ENCODE measurements at regions of chr12 and their contacts with region 1.

Region 1: GRCh38 chr12:15584366-15585041 is 204.7 kb downstream of the EPS8 start:
- H3K4me3 ChIP-seq: no peak overlapping the region
- H3K27ac ChIP-seq: no peak overlapping the region
- H3K4me1 ChIP-seq: no peaks in the 10 kb centered on the region; the same call in 1 of the 2 replicates
- CTCF ChIP-seq: no peak

Region 2: GRCh38 chr12:15522565-15523187 is 61.8 kb before region 1 on chr12:
- CTCF ChIA-PET with region 1: interaction called, 10 read pairs
- POLR2A ChIA-PET with region 1: no interaction called
- H3K4me3 ChIP-seq: no peak overlapping the region
- H3K27ac ChIP-seq: no peak overlapping the region
- H3K4me1 ChIP-seq: no peaks in the 10 kb centered on the region
- CTCF ChIP-seq: 0 out of 2 replicates have a peak, but pooled peaks have one; percentile 38

Region 3: DNA sequence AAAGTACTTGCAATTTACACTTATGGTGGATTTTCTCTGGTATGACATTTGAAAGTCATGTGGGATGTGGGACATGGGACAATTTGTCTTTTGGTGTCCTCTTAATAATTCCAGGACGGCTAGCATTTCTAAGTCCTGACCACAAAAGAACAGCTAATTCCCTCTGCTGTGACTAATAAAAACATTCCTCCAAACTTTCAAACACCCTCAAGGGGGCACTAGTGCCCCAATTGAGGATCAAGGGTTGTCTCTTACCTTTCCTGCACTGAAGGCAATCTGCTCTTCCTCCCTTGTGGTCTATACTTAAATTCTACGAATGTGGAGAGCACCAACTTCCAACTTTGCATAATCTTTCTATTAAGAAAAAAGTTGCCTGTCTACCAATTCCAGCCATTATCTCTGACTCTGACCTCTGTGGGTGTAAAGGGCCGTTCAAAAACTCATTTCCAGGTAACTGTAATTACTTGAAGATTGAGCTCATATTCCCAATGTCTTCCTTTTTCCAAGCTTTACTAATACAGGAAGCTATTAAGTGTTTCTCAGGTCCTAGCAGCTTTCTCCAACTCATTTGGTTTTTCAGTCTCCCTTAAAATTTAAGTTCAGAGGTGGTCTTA is 52.0 kb before region 1 on chr12:
- CTCF ChIA-PET with region 1: interaction called, 103 read pairs
- POLR2A ChIA-PET with region 1: no interaction called
- H3K4me3 ChIP-seq: no peak overlapping the region
- H3K27ac ChIP-seq: no peak overlapping the region
- H3K4me1 ChIP-seq: peaks cover 9% of the 10 kb centered on the region
- CTCF ChIP-seq: peak; percentile 42; the same call in 1 of the 2 replicates

Region 4: GRCh38 chr12:15574353-15574752 is 10.2 kb before region 1 on chr12:
- CTCF ChIA-PET with region 1: interaction called, 12 read pairs
- POLR2A ChIA-PET with region 1: no interaction called
- H3K4me3 ChIP-seq: no peak overlapping the region
- H3K27ac ChIP-seq: no peak overlapping the region
- H3K4me1 ChIP-seq: no peaks in the 10 kb centered on the region
- CTCF ChIP-seq: no peak

Region 5: DNA sequence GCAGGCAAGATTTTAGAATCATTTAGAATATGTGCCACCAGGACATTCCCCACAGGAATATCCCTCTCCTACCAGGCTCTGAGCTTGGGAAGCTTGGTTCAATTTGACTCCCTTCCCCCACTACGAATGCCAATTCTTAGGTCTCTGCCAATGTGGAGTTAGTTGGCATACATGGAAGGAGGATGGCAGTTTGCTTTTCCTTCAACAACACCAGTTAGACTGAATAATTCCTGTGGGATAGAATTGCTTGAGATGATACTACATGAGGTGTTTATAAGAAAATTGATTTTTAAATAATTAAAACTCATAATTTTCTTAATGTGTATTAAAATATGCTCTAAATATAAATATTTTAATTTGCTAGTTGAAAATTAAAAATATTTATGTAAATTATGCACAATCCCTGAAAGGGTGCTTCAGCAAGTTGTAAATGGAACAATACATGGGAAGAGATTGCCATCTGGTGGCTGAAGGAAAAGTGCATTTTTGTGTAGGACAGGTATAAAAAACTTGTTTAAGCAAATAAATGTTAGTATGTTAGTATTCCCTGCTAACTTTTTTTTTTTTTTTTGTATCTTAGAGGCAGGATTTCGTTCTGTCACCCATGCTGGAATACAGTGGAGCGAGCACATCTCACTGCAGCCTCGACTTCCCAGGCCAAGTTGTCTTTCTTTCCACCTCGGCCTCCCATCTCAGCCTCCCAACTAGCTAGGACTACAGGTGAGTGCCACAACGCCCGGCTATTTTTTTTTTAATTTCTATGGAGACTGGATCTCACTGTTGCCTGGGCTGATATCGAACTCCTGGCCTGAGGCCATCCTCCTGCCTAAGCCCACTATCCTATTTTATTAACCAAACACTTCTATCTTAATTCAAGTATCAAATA is 271.8 kb after region 1 on chr12:
- CTCF ChIA-PET with region 1: interaction called, 78 read pairs
- POLR2A ChIA-PET with region 1: no interaction called
- H3K4me3 ChIP-seq: no peak overlapping the region
- H3K27ac ChIP-seq: no peak overlapping the region
- H3K4me1 ChIP-seq: no peaks in the 10 kb centered on the region
- CTCF ChIP-seq: peak; percentile 40; the same call in 1 of the 2 replicates